BJ (cell line): ENCODE measurements at regions of chr7 and their contacts with region 1.

Region 1: GRCh38 chr7:47088329-47089067 is 493.4 kb downstream of the TNS3 start:
- DNase-seq: no peak
- H3K4me3 ChIP-seq: no peak overlapping the region
- H3K27me3 ChIP-seq: no peaks in the 10 kb centered on the region
- CTCF ChIP-seq: peak; percentile 84

Region 2: GRCh38 chr7:46900312-46901263 is 187.9 kb before region 1 on chr7:
- CTCF ChIA-PET with region 1: no interaction called
- POLR2A ChIA-PET with region 1: no interaction called
- DNase-seq: no peak
- H3K4me3 ChIP-seq: no peak overlapping the region
- H3K27me3 ChIP-seq: no peaks in the 10 kb centered on the region
- CTCF ChIP-seq: no peak

Region 3: DNA sequence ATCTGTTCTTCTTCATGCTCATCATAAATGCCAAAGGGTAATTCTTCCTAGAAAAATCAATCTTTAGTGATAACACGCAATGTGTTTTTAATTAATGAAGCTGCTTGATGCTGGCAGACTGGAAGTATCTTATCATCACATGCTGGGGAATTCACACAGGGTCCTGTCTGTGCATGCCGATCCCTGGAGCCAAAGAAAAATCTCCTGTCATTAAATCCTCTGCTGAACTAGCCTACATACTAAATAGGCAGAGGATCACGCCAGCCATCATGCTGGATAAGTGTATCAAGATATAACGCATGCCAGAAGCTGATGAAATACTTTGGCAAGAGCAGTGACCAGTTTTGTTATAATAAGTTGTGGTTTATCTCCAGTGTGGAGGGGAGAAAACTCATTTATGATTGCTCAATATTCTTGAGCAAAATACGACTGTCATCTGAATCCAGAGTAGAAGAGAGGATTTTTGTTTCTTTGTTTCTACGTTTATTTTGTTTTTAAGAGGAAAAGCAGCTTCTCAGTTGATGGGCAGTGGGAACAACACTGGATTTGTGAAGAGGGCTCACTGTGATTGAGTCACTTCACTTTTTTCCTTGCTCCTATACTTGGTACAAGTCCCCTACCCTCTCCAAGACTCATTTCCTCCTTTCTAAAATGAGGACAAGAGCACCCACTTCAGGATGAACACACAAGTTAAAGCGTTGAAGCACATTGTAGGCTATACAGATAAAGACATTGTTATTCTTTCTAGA is 155.6 kb before region 1 on chr7:
- CTCF ChIA-PET with region 1: interaction called, 10 read pairs
- POLR2A ChIA-PET with region 1: interaction called, 4 read pairs
- DNase-seq: peak; percentile 95
- H3K4me3 ChIP-seq: no peak overlapping the region
- H3K27me3 ChIP-seq: no peaks in the 10 kb centered on the region
- CTCF ChIP-seq: peak; percentile 33; the same call in 1 of the 2 replicates

Region 4: DNA sequence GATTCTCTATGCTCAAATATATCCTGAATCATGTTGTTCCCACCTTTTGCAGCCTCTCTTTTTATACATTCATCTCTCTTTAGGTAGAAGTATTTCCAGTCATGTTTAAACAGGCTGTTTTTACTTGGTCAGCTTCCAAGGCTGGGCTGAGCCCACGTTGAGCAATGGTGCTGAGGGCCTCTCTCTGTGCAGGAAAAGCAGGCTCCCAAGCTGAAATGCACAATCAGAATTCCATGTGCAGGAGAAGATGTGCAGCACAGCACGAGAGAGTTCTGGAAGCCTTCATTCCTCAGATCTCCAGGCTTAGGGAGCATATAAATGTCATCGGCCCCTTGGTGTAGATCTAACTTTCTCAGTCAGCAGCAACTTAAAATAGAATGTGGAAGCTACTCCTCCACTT is 95.1 kb before region 1 on chr7:
- CTCF ChIA-PET with region 1: no interaction called
- POLR2A ChIA-PET with region 1: no interaction called
- DNase-seq: no peak
- H3K4me3 ChIP-seq: no peak overlapping the region
- H3K27me3 ChIP-seq: no peaks in the 10 kb centered on the region
- CTCF ChIP-seq: no peak

Region 5: GRCh38 chr7:47170516-47170915 is 82.0 kb after region 1 on chr7:
- CTCF ChIA-PET with region 1: interaction called, 10 read pairs
- POLR2A ChIA-PET with region 1: no interaction called
- DNase-seq: no peak
- H3K4me3 ChIP-seq: no peak overlapping the region
- H3K27me3 ChIP-seq: 0 out of 2 replicates have a peak, but pooled peaks cover 3% of the 10 kb centered on the region
- CTCF ChIP-seq: peak; percentile 50